ENCODE measurements at regions of chr10 and their contacts with region 1.

Region 1: GRCh38 chr10:6401562-6402348 is 178.3 kb downstream of the PRKCQ start:
- DNase-seq: peak; percentile 81
- ATAC-seq: peak; percentile 92 to 96
- H3K4me3 ChIP-seq: peak overlapping the region; percentile 45
- H3K27ac ChIP-seq: no peak overlapping the region
- H3K4me1 ChIP-seq: peaks cover 25% of the 10 kb centered on the region
- H3K27me3 ChIP-seq: no peaks in the 10 kb centered on the region
- CTCF ChIP-seq: peak; percentile 71

Region 2: DNA sequence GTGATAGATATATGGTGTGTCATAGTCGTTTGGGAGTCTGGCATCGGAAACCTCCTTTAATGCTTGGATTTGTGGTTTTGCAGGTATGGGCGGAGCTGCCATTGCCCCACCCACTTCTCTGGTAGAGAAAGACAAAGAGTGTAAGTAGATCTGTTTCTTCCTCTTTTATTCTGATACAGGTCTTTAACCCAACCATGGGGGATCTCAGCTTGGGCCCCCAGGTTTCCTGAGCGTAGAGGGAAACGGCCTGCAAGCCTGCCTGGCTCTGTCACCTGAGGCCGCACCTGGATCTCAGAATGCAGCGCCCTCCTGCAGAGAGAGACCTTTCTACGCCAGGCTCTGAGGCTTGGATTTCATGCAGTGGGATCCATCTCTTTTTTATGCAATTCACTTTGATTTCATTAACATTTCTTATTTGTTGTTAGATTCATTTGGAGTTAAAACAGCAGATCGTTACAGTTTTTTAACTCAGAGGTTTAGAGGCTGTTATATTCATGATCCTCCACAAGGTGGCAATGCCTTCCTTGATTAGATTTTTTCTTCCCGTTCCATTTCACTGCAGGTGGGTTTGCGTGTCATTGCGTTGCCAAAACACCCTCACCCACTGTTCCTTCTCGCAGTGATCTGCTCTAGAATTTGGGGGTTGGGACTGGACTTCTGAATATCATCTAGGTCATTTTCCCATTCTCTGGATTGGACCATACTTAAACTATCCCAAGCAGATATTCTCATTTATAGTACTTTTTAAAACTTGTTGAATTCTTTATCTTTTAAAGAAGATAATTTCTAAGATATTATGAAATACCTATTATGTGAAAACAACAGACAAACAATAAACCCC is 292.9 kb before region 1 on chr10:
- intact Hi-C with region 1: loop called (anchors 5 kb)
- DNase-seq: no peak
- ATAC-seq: peak; percentile 54 to 56
- H3K4me3 ChIP-seq: no peak overlapping the region
- H3K27ac ChIP-seq: no peak overlapping the region
- H3K4me1 ChIP-seq: peaks cover 8% of the 10 kb centered on the region
- H3K27me3 ChIP-seq: no peaks in the 10 kb centered on the region
- CTCF ChIP-seq: peak; percentile 72

Measured in lower lobe of right lung (tissue), 2 donors.